Left colon (tissue), 2 donors: ENCODE measurements at regions of chr19 and their contacts with region 1.

Region 1: GRCh38 chr19:43743976-43744747 is 10.6 kb downstream of the SMG9 start:
- DNase-seq: no peak
- ATAC-seq: no peak

Region 2: GRCh38 chr19:43704002-43704705 is 40.0 kb before region 1 on chr19:
- intact Hi-C with region 1: no loop called
- DNase-seq: peak; percentile 22 to 36
- ATAC-seq: peak; percentile 18

Region 3: GRCh38 chr19:43786665-43787064 is 42.5 kb after region 1 on chr19:
- intact Hi-C with region 1: loop called in 1 of 2 experiments (anchors 2 kb)
- DNase-seq: no peak
- ATAC-seq: no peak

Region 4: DNA sequence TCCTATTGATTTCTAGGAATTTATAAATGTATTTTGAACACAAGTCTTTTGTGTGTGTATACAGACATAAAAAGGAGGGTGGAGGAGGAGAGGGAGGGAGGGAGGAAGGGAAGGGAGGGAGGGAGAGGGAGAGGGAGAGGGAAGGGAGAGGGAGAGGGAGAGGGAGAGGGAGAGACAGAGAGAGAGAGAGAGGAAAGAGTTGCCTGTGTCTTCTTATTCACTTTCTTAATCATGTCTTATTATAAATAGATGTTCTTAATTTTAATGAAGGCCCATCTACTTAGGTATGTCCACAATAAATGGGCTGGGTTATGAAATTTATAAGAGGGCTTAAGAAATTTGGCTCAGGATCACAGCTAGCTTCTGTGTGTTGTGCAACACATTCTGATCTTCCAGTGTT is 151.6 kb after region 1 on chr19:
- intact Hi-C with region 1: no loop called
- DNase-seq: no peak
- ATAC-seq: no peak